ENCODE measurements at regions of chr9 and their contacts with region 1.

Region 1: GRCh38 chr9:114033397-114034103 is 44.5 kb downstream of the AMBP start:
- DNase-seq: peak; percentile 39
- ATAC-seq: no peak
- H3K4me3 Mint-ChIP-seq: no peak overlapping the region
- H3K27ac Mint-ChIP-seq: no peak overlapping the region
- H3K4me1 Mint-ChIP-seq: no peaks in the 10 kb centered on the region
- H3K27me3 Mint-ChIP-seq: no peaks in the 10 kb centered on the region

Region 2: DNA sequence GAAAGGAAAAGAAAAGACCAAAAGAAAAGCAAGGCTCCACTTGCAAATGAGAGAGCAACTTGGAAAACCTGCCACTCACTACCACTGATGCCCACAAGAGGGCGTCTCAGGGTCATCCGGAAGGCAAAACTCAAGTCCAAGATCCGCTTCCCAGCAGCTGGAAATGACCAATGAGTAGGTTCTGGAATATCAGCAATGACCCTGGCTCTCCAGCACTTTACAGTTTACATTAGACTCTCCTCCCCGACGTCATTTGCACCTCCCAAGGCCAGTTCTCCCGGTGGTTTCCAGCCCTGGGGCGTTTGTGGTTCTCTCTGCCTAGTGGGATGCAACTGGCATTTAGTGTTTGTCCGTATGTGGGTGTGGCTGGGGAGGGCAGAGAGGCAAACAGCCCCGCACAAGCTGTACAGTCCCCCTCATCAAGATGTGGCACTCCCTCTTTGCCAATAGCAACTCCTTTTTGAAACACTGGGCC is 351.2 kb before region 1 on chr9:
- CTCF ChIA-PET with region 1: no interaction called
- POLR2A ChIA-PET with region 1: no interaction called
- intact Hi-C with region 1: loop called in 1 of 2 experiments (anchors 2 kb)
- DNase-seq: peak; percentile 73
- ATAC-seq: no peak
- H3K4me3 Mint-ChIP-seq: no peak overlapping the region
- H3K27ac Mint-ChIP-seq: no peak overlapping the region
- H3K4me1 Mint-ChIP-seq: peaks cover 2% of the 10 kb centered on the region
- H3K27me3 Mint-ChIP-seq: peaks cover 38% of the 10 kb centered on the region

Region 3: GRCh38 chr9:113807173-113808061 is 226.1 kb before region 1 on chr9:
- CTCF ChIA-PET with region 1: no interaction called
- POLR2A ChIA-PET with region 1: no interaction called
- intact Hi-C with region 1: loop called in 1 of 2 experiments (anchors 5 kb)
- DNase-seq: peak; percentile 58
- ATAC-seq: no peak
- H3K4me3 Mint-ChIP-seq: no peak overlapping the region
- H3K27ac Mint-ChIP-seq: no peak overlapping the region
- H3K4me1 Mint-ChIP-seq: peaks cover 2% of the 10 kb centered on the region
- H3K27me3 Mint-ChIP-seq: peaks cover 12% of the 10 kb centered on the region

Measured in activated CD4-positive, alpha-beta T cell treated with anti-CD3 and anti-CD28 coated beads for 36 hours (primary cell).